GM18951 (cell line): ENCODE measurements at regions of chr1 and their contacts with region 1.

Region 1: GRCh38 chr1:147591261-147591891 is 50.1 kb downstream of the BCL9 start:
- POLR2A ChIP-seq: no peak

Region 2: GRCh38 chr1:147541672-147542568 is 49.5 kb before region 1 on chr1:
- in situ Hi-C with region 1: loop called (anchors 5 kb)
- POLR2A ChIP-seq: no peak

Region 3: DNA sequence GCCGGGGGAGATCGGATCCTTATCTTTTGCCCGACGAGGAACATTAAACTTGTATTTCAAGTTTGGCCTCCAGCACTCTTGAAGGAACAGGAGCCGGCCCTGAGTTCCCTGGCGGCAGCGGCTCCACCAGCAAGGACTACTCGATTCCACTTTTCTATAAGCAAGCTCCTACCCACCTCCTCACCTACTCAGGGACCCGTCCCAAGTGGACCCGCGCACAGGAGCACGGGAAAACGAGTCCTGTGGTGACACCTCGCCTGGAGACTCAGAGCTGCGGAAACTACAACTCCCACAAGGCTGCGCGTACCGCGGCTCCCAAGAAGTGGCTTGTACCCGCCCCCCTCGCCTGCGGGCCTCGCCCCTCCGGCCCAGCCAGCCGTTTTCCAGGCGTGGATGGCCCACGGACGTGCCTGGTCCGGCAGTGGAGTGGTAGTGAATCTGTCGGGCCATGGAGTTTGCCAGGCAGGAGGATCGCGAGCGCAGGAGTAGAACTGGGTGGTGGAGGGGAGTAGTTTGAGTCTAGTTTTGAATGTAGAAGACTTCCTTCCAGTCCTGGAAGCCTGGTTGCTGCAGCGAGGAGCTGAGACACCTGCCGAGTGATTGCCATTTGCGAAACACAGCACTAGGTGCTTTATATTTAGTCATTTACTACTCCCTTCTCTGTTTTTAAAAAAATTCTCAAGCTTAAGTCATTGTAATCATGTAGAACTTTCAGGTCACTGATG is 79.1 kb after region 1 on chr1 and contains the start of gene ACP6:
- in situ Hi-C with region 1: no loop called
- POLR2A ChIP-seq: peak; percentile 37